Dorsolateral prefrontal cortex (tissue), 120 donors: ENCODE measurements at regions of chr4 and their contacts with region 1.

Region 1: DNA sequence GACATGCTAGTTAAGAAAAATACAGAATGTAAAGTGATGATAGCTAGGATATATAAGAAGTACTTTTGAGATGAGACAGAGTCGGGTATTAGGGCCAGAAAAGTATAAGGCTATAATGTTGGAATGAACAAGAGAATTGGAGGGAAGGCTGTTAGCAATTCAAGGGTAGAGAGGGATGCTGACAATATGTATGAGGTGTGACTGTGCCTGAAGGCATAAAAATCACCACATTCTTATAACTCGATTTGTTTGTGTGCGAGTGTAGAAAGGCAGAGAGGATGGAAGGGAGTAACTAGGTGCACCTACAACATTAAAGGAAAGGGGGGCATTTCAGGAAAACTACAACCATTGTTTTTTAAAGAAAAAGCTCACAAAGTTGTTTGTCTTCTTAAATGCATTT is 86.0 kb downstream of the FAT4 start:
- DNase-seq: no peak
- H3K4me3 ChIP-seq: no peak overlapping the region
- H3K27ac ChIP-seq: no peak overlapping the region
- H3K27me3 ChIP-seq: no peaks in the 10 kb centered on the region
- CTCF ChIP-seq: no peak

Region 2: DNA sequence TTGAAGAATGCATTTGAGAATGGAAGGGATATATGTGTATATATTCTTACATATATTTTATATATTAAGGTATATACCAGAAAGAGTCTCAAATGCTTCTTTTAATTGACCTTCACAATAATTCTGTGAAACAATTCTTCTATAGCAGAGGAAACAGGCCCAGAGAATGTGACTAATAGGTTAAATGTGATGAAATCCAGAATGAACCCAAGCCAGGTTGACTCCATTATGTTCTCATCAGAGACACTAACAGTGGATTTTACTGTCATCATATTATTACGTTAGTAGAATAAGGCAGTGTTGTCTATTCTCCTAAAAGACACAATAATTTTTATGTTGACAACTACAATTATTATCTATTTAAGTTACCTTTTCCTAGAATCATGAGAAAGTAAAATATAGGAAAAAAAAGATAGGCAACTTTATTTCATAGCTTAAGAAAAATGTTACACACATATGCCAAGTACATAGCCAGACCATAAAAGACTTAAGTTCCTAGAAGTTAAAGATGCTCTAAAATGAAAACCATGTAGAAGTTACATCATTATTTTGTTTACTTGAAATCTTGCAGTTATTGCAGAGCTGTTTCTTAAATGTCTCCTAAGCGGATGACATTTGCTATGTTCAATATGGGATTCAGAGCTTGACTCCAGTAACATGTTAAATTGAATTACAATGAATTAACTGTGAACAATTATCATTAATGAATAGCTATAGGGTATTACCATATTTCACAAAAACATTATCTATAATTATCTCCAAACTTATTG is 632.0 kb before region 1 on chr4:
- intact Hi-C with region 1: no loop called
- DNase-seq: no peak
- H3K4me3 ChIP-seq: no peak overlapping the region
- H3K27ac ChIP-seq: no peak overlapping the region
- H3K27me3 ChIP-seq: no peaks in the 10 kb centered on the region
- CTCF ChIP-seq: no peak

Region 3: DNA sequence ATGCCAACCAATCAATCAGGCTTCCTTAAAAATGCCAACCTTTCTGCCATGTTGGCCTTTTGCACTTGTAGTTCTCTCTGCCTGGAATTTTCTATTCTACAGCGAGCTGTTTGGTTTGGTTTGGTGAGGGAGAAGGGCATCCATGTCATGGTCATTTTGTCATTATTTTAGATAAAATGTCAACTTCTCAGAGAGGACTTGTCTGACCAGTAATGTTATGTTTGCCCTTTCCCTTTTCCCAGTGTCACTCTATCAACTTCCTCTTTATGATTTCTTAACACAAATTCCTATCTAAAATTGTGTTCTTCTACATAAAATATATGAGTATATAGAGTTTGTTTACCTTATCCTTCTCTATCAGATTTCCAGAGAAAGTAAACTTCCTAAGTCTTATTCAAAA is 19.1 kb after region 1 on chr4:
- intact Hi-C with region 1: loop called in 1 of 2 experiments (anchors 2 kb)
- DNase-seq: no peak
- H3K4me3 ChIP-seq: no peak overlapping the region
- H3K27ac ChIP-seq: no peak overlapping the region
- H3K27me3 ChIP-seq: no peaks in the 10 kb centered on the region
- CTCF ChIP-seq: no peak